Calu3 (cell line): ENCODE measurements at regions of chr2 and their contacts with region 1.

Region 1: DNA sequence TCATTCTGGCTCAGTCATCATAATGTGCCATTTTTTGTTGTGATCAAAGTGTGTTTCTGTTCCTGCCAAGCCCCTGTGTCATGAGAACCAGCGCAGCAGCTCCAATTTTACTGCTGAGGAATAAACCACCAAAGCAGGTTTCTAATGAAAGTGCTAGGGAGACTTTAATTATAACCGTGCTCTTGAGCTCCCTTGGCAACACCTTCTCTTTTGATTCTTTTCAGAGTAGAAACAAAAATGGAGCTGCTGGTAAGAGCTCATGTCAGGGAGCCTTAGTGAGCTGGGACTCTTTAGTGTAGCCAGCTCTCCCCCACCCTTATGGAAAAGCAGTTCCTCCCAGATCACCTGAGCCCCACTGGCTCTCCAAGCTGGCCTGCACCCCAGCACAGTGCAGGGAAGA is 74.3 kb downstream of the LYPD1 start:
- DNase-seq: no peak
- H3K4me3 Mint-ChIP-seq: no peak overlapping the region
- H3K27ac Mint-ChIP-seq: no peak overlapping the region
- H3K4me1 Mint-ChIP-seq: peaks cover 22% of the 10 kb centered on the region
- H3K27me3 Mint-ChIP-seq: no peaks in the 10 kb centered on the region
- CTCF ChIP-seq: no peak

Region 2: DNA sequence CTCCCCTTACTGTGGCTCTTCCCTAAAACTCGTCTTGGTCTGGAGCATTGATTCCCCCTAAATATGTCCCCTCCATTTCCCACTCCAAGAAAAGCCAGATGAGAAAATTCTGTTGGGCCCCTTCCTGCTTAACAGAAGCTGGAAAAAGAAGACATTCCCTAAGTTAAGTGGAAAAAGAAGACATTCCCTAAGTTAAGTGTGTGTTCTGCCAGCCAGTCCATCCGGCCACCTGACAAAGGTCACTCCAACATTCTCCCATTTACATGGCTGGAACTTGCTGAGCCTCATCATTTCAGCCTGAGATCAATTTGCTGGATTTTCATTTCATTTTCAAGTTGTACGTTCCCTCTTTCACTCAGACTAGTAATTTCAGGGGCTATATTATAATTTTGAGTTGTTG is 22.3 kb after region 1 on chr2:
- CTCF ChIA-PET with region 1: no interaction called
- intact Hi-C with region 1: loop called (anchors 1 kb)
- DNase-seq: no peak
- H3K4me3 Mint-ChIP-seq: no peak overlapping the region
- H3K27ac Mint-ChIP-seq: no peak overlapping the region
- H3K4me1 Mint-ChIP-seq: peaks cover 17% of the 10 kb centered on the region
- H3K27me3 Mint-ChIP-seq: no peaks in the 10 kb centered on the region
- CTCF ChIP-seq: no peak

Region 3: GRCh38 chr2:132651115-132652045 is 55.7 kb after region 1 on chr2:
- CTCF ChIA-PET with region 1: no interaction called
- intact Hi-C with region 1: no loop called
- DNase-seq: no peak
- H3K4me3 Mint-ChIP-seq: no peak overlapping the region
- H3K27ac Mint-ChIP-seq: no peak overlapping the region
- H3K4me1 Mint-ChIP-seq: no peaks in the 10 kb centered on the region
- H3K27me3 Mint-ChIP-seq: no peaks in the 10 kb centered on the region
- CTCF ChIP-seq: no peak